B cell (primary cell): ENCODE measurements at regions of chr10 and their contacts with region 1.

Region 1: DNA sequence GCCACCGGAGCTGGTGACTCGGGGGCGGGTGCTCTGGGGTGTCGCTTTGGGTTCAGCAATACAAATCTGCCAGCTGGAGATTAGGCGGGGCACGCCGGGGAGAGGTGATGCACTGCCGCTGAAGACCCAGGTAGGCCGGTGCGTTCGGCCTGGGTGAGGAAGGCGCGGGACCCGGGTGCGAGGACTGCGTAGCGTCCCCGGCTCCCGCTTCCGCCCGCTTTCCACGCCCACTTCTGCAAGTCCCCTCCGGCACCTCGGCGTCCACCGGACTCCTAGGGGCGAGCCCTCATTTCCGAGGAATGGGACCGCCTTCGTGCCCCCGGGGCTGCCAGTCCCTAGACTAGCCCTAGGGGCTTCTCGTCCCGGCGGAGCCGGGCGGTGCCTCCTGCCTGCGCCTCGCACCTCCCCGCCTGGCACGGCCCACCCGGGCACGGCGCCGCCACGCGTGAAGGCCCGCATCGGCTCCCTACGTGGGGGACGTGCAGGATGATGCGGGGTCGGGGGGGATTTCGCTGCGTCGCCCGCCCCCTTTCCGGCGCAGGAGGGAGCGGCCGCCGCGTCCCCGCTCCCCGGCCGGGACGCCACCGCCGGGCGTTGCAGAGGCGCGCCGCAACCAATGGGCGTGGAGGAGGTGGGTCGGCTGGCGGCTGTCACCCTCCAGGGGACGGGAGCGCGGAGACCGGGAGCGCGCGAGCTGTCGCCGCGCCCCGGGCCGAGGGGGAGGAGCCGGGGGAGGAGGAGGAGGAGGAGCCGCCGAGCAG is 40.0 kb downstream of the HK1 start:
- DNase-seq: peak; percentile 93
- ATAC-seq: peak; percentile 93
- H3K4me3 ChIP-seq: peak overlapping the region; percentile 3 to 98 (median 94)
- H3K4me3 Mint-ChIP-seq: peak overlapping the region; percentile 96
- H3K27ac ChIP-seq: peak overlapping the region; percentile 82 to 85
- H3K27ac Mint-ChIP-seq: peak overlapping the region; percentile 91
- H3K4me1 ChIP-seq: peaks cover 22 to 31% of the 10 kb centered on the region in 2 donors
- H3K4me1 Mint-ChIP-seq: peaks cover 37% of the 10 kb centered on the region
- H3K27me3 ChIP-seq: no peaks in the 10 kb centered on the region
- H3K27me3 Mint-ChIP-seq: no peaks in the 10 kb centered on the region
- CTCF ChIP-seq: no peak

Region 2: GRCh38 chr10:68752711-68753350 is 565.5 kb before region 1 on chr10:
- CTCF ChIA-PET with region 1: no interaction called
- POLR2A ChIA-PET with region 1: no interaction called
- intact Hi-C with region 1: no loop called
- DNase-seq: no peak
- ATAC-seq: no peak
- H3K4me3 ChIP-seq: no peak overlapping the region
- H3K4me3 Mint-ChIP-seq: no peak overlapping the region
- H3K27ac ChIP-seq: no peak overlapping the region
- H3K27ac Mint-ChIP-seq: no peak overlapping the region
- H3K4me1 ChIP-seq: no peaks in the 10 kb centered on the region
- H3K4me1 Mint-ChIP-seq: no peaks in the 10 kb centered on the region
- H3K27me3 ChIP-seq: no peaks in the 10 kb centered on the region
- H3K27me3 Mint-ChIP-seq: no peaks in the 10 kb centered on the region
- CTCF ChIP-seq: no peak

Region 3: GRCh38 chr10:68876246-68877138 is 441.8 kb before region 1 on chr10:
- CTCF ChIA-PET with region 1: no interaction called
- POLR2A ChIA-PET with region 1: no interaction called
- intact Hi-C with region 1: no loop called
- DNase-seq: no peak
- ATAC-seq: no peak
- H3K4me3 ChIP-seq: no peak overlapping the region
- H3K4me3 Mint-ChIP-seq: no peak overlapping the region
- H3K27ac ChIP-seq: no peak overlapping the region
- H3K27ac Mint-ChIP-seq: no peak overlapping the region
- H3K4me1 ChIP-seq: no peaks in the 10 kb centered on the region
- H3K4me1 Mint-ChIP-seq: no peaks in the 10 kb centered on the region
- H3K27me3 ChIP-seq: no peaks in the 10 kb centered on the region
- H3K27me3 Mint-ChIP-seq: no peaks in the 10 kb centered on the region
- CTCF ChIP-seq: no peak

Region 4: DNA sequence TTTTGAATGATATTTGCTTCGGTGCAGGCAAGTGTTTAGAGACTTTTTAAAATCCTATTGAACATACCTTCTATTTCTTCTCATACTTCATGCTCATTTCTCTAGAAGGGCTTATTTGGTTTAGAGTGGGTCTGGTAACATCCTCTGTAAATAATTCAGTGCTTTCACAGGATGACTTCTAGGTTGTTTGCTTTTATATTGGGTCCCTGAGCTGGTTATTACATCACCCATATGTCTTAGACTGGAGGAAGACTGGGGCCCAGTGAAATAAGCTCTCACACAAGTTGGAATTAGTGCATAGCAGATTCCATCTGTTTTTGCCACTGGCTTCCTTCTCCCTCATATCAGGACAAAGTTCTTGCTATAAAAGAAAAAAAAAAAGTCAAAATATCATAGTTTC is 131.8 kb before region 1 on chr10:
- CTCF ChIA-PET with region 1: no interaction called
- POLR2A ChIA-PET with region 1: no interaction called
- intact Hi-C with region 1: no loop called
- DNase-seq: no peak
- ATAC-seq: no peak
- H3K4me3 ChIP-seq: no peak overlapping the region
- H3K4me3 Mint-ChIP-seq: no peak overlapping the region
- H3K27ac ChIP-seq: no peak overlapping the region
- H3K27ac Mint-ChIP-seq: no peak overlapping the region
- H3K4me1 ChIP-seq: peaks cover under 1 to 1% of the 10 kb centered on the region in 2 donors
- H3K4me1 Mint-ChIP-seq: peaks cover 16% of the 10 kb centered on the region
- H3K27me3 ChIP-seq: no peaks in the 10 kb centered on the region
- H3K27me3 Mint-ChIP-seq: no peaks in the 10 kb centered on the region
- CTCF ChIP-seq: no peak

Region 5: DNA sequence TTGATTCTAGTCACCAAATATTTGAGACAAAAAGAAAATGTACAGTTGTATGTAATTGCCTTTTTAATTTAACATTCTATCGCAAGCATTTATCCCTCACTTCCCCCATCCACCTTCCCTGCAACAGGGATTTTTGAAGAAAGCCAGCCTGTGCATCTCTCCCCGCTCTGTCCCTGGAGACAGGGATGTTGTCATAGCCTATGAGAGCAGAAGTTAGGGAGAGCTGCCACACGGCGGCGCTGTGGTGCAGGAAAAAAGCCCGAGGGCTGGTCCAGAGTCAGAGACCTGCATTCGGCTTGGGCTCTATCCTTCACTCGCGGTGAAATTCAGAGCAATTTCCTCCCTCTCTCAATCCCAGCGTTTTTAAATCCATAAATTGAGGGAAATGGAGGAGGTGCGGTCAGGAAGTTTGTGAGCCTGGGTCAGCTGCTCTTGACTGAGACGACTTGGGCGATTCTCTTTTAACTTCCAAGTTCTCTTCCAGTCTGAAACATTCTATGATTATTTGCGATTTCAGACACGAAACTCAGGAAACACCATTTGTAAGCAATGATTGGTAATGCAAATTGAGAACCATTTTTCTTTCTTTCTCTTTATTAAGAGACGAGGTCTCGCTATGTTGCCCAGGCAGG is 80.6 kb before region 1 on chr10:
- CTCF ChIA-PET with region 1: interaction called, 4 read pairs
- POLR2A ChIA-PET with region 1: no interaction called
- intact Hi-C with region 1: loop called (anchors 2 kb)
- DNase-seq: peak; percentile 85
- ATAC-seq: peak; percentile 99
- H3K4me3 ChIP-seq: no peak overlapping the region
- H3K4me3 Mint-ChIP-seq: no peak overlapping the region
- H3K27ac ChIP-seq: no peak overlapping the region
- H3K27ac Mint-ChIP-seq: no peak overlapping the region
- H3K4me1 ChIP-seq: peaks cover 0 to 3% of the 10 kb centered on the region in 2 donors
- H3K4me1 Mint-ChIP-seq: no peaks in the 10 kb centered on the region
- H3K27me3 ChIP-seq: no peaks in the 10 kb centered on the region
- H3K27me3 Mint-ChIP-seq: no peaks in the 10 kb centered on the region
- CTCF ChIP-seq: peak; percentile 88

Region 6: GRCh38 chr10:69348816-69349541 is 30.7 kb after region 1 on chr10:
- CTCF ChIA-PET with region 1: interaction called, 3 read pairs
- POLR2A ChIA-PET with region 1: no interaction called
- intact Hi-C with region 1: loop called (anchors 2 kb)
- DNase-seq: peak; percentile 58
- ATAC-seq: peak; percentile 57
- H3K4me3 ChIP-seq: peak overlapping the region in 2 of 5 experiments; percentile 4 to 42
- H3K4me3 Mint-ChIP-seq: peak overlapping the region; percentile 81
- H3K27ac ChIP-seq: peak overlapping the region; percentile 54 to 76
- H3K27ac Mint-ChIP-seq: peak overlapping the region; percentile 93
- H3K4me1 ChIP-seq: peaks cover 62 to 63% of the 10 kb centered on the region in 2 donors
- H3K4me1 Mint-ChIP-seq: peaks cover 58% of the 10 kb centered on the region
- H3K27me3 ChIP-seq: no peaks in the 10 kb centered on the region
- H3K27me3 Mint-ChIP-seq: no peaks in the 10 kb centered on the region
- CTCF ChIP-seq: no peak

Region 7: DNA sequence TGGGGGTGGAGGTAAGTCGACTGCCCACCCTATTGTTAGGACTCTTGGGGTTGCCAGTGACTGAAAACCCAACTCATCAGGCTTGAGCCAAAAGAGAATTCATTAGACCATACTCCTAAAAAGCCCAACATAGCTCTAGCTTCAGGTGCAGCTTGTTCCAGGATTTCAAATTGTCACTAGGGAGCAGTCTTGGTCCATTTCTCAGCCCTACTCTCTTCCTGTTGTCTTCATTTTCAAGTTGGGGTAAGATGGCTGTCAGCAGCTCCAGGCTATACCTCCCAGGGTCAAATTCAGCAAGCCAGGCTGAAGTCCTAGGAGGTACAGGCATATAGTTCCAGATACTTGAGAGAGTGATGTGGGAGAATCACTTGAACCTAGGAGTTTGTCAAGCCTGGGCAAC is 468.5 kb after region 1 on chr10:
- CTCF ChIA-PET with region 1: no interaction called
- POLR2A ChIA-PET with region 1: no interaction called
- intact Hi-C with region 1: no loop called
- DNase-seq: no peak
- ATAC-seq: no peak
- H3K4me3 ChIP-seq: no peak overlapping the region
- H3K4me3 Mint-ChIP-seq: no peak overlapping the region
- H3K27ac ChIP-seq: no peak overlapping the region
- H3K27ac Mint-ChIP-seq: no peak overlapping the region
- H3K4me1 ChIP-seq: no peaks in the 10 kb centered on the region
- H3K4me1 Mint-ChIP-seq: no peaks in the 10 kb centered on the region
- H3K27me3 ChIP-seq: peaks cover 0 to 3% (median 0%) of the 10 kb centered on the region in 4 experiments
- H3K27me3 Mint-ChIP-seq: peaks cover 19% of the 10 kb centered on the region
- CTCF ChIP-seq: no peak